ENCODE measurements at regions of chr1 and their contacts with region 1.

Region 1: DNA sequence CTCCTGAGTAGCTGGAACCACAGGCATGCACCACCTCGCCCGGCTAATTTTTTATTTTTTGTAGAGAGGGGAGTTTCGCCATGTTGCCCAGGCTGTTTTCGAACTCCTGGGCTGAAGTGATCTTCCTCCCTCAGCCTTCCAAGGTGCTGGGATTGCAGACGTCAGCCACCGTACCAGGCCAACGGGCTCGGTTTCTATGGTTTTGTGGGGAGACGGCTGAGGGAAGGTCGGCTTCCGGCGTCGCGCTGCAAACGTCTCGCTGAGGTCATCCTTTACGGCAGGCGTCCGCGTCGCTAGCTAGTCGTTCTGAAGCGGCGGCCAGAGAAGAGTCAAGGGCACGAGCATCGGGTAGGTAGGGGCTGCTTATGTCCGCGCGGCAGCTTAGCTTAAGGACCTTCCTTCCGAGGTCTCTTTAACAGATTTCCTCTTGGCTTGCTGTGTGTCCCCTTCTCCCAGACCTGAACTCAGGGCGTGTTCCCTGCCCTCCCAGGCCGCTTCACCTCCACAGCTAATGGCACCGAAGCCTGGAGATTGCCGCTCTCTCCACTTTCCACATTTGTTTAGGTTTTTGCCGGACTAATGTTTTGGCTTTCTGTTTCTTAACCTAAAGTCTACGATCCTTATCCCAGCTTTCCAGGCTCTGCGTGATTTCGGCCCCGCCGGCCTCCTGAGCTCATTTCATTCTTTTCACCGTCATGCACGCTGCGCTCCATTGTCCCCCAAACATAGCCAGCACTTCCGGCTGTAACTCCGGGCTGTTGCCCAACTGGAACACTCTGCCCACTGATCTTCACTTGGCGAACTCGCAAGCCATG is at the start of gene NDUFS5:
- DNase-seq: peak; percentile 93
- ATAC-seq: peak; percentile 90
- H3K4me3 Mint-ChIP-seq: peak within 1 kb of the TSS; percentile 87
- H3K27ac Mint-ChIP-seq: peak within 1 kb of the TSS; percentile 99
- H3K4me1 Mint-ChIP-seq: peaks cover 30% of the 10 kb centered on the region
- H3K27me3 Mint-ChIP-seq: no peaks in the 10 kb centered on the region
- total RNA-seq, gene NDUFS5: 150 to 220 TPM

Region 2: GRCh38 chr1:38012363-38013226 is 1013.7 kb before region 1 on chr1 and contains the start of gene UTP11:
- CTCF ChIA-PET with region 1: no interaction called
- POLR2A ChIA-PET with region 1: no interaction called
- intact Hi-C with region 1: loop called in 1 of 2 experiments (anchors 5 kb)
- DNase-seq: peak; percentile 94
- ATAC-seq: peak; percentile 81
- H3K4me3 Mint-ChIP-seq: peak within 1 kb of the TSS; percentile 97
- H3K27ac Mint-ChIP-seq: peak within 1 kb of the TSS; percentile 95
- H3K4me1 Mint-ChIP-seq: peaks cover 51% of the 10 kb centered on the region
- H3K27me3 Mint-ChIP-seq: no peaks in the 10 kb centered on the region
- total RNA-seq, gene UTP11: 68.9 to 82.4 TPM

Region 3: DNA sequence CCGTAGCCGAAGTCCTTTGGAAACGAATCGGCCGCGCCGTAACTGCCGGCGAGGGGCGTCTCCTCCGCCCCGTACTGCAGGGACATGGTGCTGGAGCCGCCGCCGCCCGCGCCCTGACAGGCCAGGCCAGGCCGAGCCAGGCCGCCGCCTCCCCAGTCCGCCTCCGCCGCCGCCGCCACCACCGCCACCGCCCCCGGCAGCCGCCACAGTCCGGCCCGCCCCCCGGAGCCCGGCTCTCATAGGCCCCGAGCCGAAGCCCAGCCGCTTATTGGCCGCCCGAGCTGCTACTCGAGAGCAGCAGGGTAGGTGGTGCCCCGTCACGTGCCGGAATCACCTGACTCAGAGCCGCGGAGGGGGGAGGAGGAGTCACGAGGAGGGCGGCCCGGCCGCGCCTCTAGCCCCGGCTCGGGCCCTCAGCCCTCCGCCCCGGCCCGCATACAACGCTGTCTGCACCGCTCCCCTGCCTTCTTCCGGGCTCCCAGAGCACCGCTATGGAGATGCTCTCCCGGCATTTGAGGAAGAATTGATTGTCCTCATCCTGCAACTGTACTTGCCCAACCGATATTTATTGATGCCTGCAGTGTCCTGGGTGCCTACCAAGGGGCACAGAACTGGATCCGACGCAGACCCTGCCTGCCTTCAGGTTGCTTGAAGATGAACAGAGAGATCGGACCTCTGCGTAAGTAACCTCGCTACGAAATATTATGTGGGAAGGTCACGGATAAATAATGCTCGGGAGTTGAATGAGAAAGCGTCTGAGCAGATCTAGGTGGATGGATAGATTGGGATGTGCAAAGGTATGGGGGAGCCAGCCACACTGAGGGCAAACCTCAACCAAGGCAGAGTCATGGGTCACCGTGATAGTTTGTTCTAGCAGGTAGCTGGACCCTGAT is 166.5 kb before region 1 on chr1 and contains the start of gene RRAGC:
- CTCF ChIA-PET with region 1: no interaction called
- POLR2A ChIA-PET with region 1: no interaction called
- intact Hi-C with region 1: loop called in 1 of 2 experiments (anchors 1 kb)
- DNase-seq: peak; percentile 99
- ATAC-seq: peak; percentile 98
- H3K4me3 Mint-ChIP-seq: peak within 1 kb of the TSS; percentile 98
- H3K27ac Mint-ChIP-seq: peak within 1 kb of the TSS; percentile 91
- H3K4me1 Mint-ChIP-seq: peaks cover 58% of the 10 kb centered on the region
- H3K27me3 Mint-ChIP-seq: no peaks in the 10 kb centered on the region
- total RNA-seq, gene RRAGC: 15.8 to 19.0 TPM

Region 4: GRCh38 chr1:38990738-38991639 is 35.3 kb before region 1 on chr1 and contains the start of gene AKIRIN1:
- CTCF ChIA-PET with region 1: interaction called, 4 read pairs
- POLR2A ChIA-PET with region 1: interaction called, 3 read pairs
- intact Hi-C with region 1: loop called (anchors 1 to 5 kb)
- DNase-seq: peak; percentile 98
- ATAC-seq: peak; percentile 91
- H3K4me3 Mint-ChIP-seq: peak within 1 kb of the TSS; percentile 87
- H3K27ac Mint-ChIP-seq: peak within 1 kb of the TSS; percentile 88
- H3K4me1 Mint-ChIP-seq: peaks cover 55% of the 10 kb centered on the region
- H3K27me3 Mint-ChIP-seq: no peaks in the 10 kb centered on the region
- total RNA-seq, gene AKIRIN1: 65.7 to 86.0 TPM

Region 5: DNA sequence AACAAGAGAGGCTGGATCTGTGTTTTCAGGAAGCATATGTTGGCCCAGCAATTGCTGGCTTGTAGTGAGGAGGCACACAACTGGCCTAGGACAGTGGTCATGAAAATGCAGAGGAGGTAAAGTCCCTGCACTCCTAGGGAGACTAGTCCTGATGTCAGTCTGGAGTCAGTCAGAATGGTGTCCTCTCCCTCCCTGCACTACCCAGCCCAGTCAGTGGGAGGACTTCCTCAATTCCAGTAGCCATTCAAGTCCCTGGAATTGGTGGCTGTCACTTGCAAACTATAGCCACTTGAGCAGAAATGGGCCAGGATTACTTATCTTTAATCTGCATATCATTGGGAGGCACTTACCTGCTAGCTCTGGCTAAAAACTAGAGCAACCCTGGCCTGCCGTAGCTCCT is 18.5 kb after region 1 on chr1:
- CTCF ChIA-PET with region 1: interaction called, 4 read pairs
- POLR2A ChIA-PET with region 1: no interaction called
- intact Hi-C with region 1: loop called in 1 of 2 experiments (anchors 2 kb)
- DNase-seq: no peak
- ATAC-seq: no peak
- H3K4me3 Mint-ChIP-seq: no peak overlapping the region
- H3K27ac Mint-ChIP-seq: no peak overlapping the region
- H3K4me1 Mint-ChIP-seq: peaks cover 3% of the 10 kb centered on the region
- H3K27me3 Mint-ChIP-seq: no peaks in the 10 kb centered on the region

Region 6: DNA sequence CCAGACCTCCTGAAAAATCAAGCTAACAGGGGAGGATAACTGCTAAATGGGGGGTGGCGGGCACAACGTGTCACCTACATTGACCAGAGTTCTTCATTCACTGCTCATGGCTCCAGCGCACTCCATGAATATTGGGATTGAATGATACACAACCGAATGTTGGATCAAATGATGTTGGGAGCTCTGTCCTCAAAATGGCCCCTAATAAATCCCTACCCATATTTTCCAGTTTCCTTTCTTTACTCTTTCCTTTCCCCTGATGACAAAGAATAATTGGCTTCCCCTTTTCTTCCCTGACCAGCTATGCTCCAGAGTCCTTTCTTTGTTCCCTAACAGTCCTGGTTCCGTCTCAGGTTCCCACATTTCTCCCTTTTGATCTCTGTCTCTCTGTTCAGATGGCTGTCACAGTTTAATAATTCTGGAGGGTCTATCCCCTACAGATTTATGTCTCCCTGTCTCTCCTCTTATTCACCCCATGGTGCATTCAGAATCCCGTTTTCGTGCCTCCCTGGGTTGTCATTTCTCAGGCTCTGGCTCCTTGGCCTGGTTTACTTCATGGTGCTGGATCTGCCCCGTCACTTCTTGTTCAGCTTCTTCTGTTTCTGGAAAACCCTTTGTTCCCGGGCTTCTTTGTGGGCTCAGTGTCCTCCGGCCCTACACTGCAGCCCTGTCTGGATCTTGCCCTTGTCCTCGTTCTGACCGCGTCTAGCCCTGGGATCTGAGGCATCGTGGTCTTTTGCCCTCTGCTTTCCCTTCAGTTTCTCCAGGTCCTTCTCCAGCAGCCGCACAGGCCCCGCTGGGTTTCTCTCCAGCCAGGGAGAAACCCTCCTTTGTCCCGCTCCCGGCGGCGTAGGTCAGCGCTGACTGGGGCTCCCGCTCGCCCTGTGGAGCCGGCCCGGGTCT is 78.2 kb after region 1 on chr1:
- CTCF ChIA-PET with region 1: no interaction called
- POLR2A ChIA-PET with region 1: no interaction called
- intact Hi-C with region 1: no loop called
- DNase-seq: no peak
- ATAC-seq: no peak
- H3K4me3 Mint-ChIP-seq: peak overlapping the region; percentile 58
- H3K27ac Mint-ChIP-seq: no peak overlapping the region
- H3K4me1 Mint-ChIP-seq: peaks cover 33% of the 10 kb centered on the region
- H3K27me3 Mint-ChIP-seq: peaks cover 8% of the 10 kb centered on the region

Region 7: DNA sequence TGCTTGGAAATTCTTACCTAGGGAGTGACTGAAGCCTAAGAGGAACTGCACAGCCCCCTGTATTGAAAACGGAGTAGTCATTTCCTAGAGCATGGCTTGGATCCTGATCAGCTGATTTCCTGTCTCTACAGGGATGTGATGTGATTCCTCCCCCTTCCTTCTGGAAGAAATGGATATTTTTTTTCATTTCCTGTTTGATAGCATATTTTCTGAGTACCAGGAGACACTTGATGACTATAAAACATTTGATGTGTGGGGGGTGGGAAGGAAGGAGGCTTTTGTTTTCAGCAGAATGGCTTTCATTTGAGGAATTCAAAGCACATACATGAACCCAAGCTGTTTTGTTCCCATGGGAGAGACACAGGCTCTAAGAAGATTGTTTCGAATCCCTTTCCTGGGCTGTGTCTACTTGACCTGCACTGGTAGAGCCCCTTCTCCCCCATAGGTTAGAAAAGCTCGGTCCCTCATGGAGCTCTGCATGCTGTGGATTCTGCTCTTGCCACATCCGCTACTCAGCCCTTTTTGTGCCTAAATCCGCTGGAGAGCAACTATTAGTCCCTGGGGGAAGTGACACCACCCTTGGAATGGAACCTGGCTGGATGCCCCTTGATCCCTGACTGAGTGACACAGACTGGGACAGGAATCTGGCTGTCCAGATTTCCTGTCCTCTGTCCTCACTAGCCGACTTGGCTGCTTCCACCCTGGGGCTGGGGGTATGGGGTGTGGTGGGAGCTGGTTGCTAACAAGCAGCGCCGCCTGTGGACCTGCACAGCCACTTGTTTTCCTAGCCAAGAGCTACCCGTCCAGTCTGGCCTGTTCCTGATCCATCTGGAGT is 106.5 kb after region 1 on chr1:
- CTCF ChIA-PET with region 1: no interaction called
- POLR2A ChIA-PET with region 1: no interaction called
- intact Hi-C with region 1: no loop called
- DNase-seq: no peak
- ATAC-seq: no peak
- H3K4me3 Mint-ChIP-seq: no peak overlapping the region
- H3K27ac Mint-ChIP-seq: no peak overlapping the region
- H3K4me1 Mint-ChIP-seq: peaks cover 8% of the 10 kb centered on the region
- H3K27me3 Mint-ChIP-seq: no peaks in the 10 kb centered on the region

Region 8: GRCh38 chr1:39196244-39197215 is 170.3 kb after region 1 on chr1:
- CTCF ChIA-PET with region 1: interaction called, 4 read pairs
- POLR2A ChIA-PET with region 1: no interaction called
- intact Hi-C with region 1: loop called in 1 of 2 experiments (anchors 2 kb)
- DNase-seq: peak; percentile 78
- ATAC-seq: peak; percentile 42
- H3K4me3 Mint-ChIP-seq: peak overlapping the region; percentile 54
- H3K27ac Mint-ChIP-seq: peak overlapping the region; percentile 87
- H3K4me1 Mint-ChIP-seq: peaks cover 84% of the 10 kb centered on the region
- H3K27me3 Mint-ChIP-seq: no peaks in the 10 kb centered on the region

Region 9: GRCh38 chr1:39738622-39739366 is 712.5 kb after region 1 on chr1 and contains the start of gene PPIE:
- CTCF ChIA-PET with region 1: no interaction called
- POLR2A ChIA-PET with region 1: no interaction called
- intact Hi-C with region 1: loop called in 1 of 2 experiments (anchors 2 kb)
- DNase-seq: peak; percentile 99
- ATAC-seq: peak; percentile 98
- H3K4me3 Mint-ChIP-seq: peak within 1 kb of the TSS; percentile 96
- H3K27ac Mint-ChIP-seq: peak within 1 kb of the TSS; percentile 94
- H3K4me1 Mint-ChIP-seq: peaks cover 36% of the 10 kb centered on the region
- H3K27me3 Mint-ChIP-seq: peaks cover 7% of the 10 kb centered on the region
- total RNA-seq, gene PPIE: 55.3 to 70.4 TPM

Measured in activated CD4-positive, alpha-beta T cell treated with anti-CD3 and anti-CD28 coated beads for 36 hours (primary cell).